Heart left ventricle (tissue), 16 donors: ENCODE measurements at regions of chr12 and their contacts with region 1.

Region 1: GRCh38 chr12:2959505-2960389 is 550 bp downstream of the TEAD4 start:
- DNase-seq: peak; percentile 44 to 86 (median 70)
- ATAC-seq: peak in 3 of 4 donors; percentile 29 to 74 (median 68)
- H3K4me3 ChIP-seq: peak overlapping the region; percentile 39 to 86 (median 66)
- H3K27ac ChIP-seq: peak overlapping the region; percentile 79 to 94 (median 85)
- H3K4me1 ChIP-seq: peaks cover 0 to 51% (median 21%) of the 10 kb centered on the region in 12 donors
- H3K27me3 ChIP-seq: peaks cover 0 to 25% (median 0%) of the 10 kb centered on the region in 9 donors
- CTCF ChIP-seq: peak in 2 of 12 donors; percentile 6 to 10
- POLR2A ChIP-seq: peak in 1 of 2 donors; percentile 43

Region 2: DNA sequence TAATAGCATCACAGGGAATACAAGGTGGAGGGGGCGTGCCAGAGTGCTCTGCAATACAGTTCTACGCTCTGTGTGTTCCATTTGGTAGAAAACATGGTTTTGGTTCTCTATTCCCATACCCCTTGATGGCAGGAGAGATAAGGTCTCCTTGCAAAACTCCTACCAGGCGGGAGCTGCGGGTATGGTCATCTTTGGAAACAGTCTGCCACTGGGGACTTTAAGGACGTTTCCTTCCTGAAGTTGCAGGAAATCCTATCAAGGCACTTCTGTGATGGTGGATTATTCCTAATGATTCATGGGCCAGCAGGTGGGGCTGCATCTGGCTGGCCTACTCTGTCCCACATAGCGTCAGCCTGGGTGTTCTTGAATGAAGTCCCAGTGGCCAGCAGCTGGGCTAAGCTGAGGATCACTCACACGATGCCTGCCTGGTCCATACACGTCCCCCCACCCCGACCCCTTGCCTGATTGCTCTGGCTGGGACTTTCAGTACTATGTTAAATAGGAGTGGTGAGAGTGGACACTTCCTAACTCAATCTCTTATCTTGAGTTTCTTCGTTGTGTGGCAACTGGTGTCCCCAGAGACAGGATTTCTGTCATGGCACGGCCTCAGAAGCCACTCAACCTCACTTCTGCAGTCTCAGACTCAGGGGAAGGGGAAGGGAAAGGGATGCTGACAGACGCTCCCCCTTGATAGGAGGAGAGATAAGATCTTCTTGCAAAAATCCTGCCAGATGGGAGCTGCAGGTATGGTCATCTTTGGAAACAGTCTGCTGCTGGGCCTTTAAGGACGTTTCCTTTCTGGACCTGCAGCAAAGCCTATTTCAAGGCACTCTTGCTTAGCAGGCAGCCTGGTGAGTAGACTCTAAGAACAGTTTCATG is 226.0 kb before region 1 on chr12:
- intact Hi-C with region 1: no loop called
- DNase-seq: no peak
- ATAC-seq: no peak
- H3K4me3 ChIP-seq: no peak overlapping the region
- H3K27ac ChIP-seq: no peak overlapping the region
- H3K4me1 ChIP-seq: no peaks in the 10 kb centered on the region
- H3K27me3 ChIP-seq: peaks cover 0 to 23% (median 0%) of the 10 kb centered on the region in 9 donors
- CTCF ChIP-seq: no peak
- POLR2A ChIP-seq: no peak

Region 3: DNA sequence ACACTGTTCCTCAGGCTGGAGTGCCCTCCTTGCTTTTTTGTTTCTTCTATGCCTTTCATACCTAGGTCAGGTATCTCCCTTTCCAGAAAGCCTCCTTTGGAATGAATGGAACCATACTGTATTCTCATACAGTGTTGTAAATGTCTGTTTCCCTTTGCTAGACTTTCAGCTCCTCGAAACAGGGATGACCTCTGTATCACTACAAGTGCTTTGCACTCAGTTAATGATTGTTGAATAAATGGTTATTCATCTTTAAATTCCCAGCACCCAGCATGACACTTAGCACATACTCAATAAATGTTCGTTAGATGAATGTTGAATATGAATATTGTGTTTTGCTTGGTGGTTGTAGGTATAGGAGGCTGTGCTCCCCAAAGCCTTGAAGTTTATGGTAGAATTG is 74.9 kb before region 1 on chr12:
- intact Hi-C with region 1: loop called in 1 of 10 experiments (anchors 5 kb)
- DNase-seq: no peak
- ATAC-seq: no peak
- H3K4me3 ChIP-seq: no peak overlapping the region
- H3K27ac ChIP-seq: no peak overlapping the region
- H3K4me1 ChIP-seq: peaks cover 0 to 2% (median 0%) of the 10 kb centered on the region in 12 donors
- H3K27me3 ChIP-seq: no peaks in the 10 kb centered on the region
- CTCF ChIP-seq: no peak
- POLR2A ChIP-seq: no peak